ENCODE measurements at regions of chr5 and their contacts with region 1.

Region 1: GRCh38 chr5:141878711-141879425 is 658 bp upstream of the PCDH1 start:
- DNase-seq: peak; percentile 73 to 95 (median 74)
- ATAC-seq: peak; percentile 76
- H3K4me3 ChIP-seq: peak overlapping the region; percentile 58
- H3K27ac ChIP-seq: no peak overlapping the region
- H3K4me1 ChIP-seq: peaks cover 37 to 59% of the 10 kb centered on the region in 2 experiments; a peak in 4 of 5 replicates
- H3K27me3 ChIP-seq: peaks cover 26 to 75% of the 10 kb centered on the region in 2 experiments
- CTCF ChIP-seq: peak; percentile 92 to 98 (median 94)
- EP300 ChIP-seq: no peak
- POLR2A ChIP-seq: no peak
- RAD21 ChIP-seq: peak; percentile 84 to 93

Region 2: GRCh38 chr5:141691867-141692532 is 186.9 kb before region 1 on chr5:
- CTCF ChIA-PET with region 1: interaction called, 8 read pairs
- POLR2A ChIA-PET with region 1: no interaction called
- in situ Hi-C with region 1: no loop called
- intact Hi-C with region 1: loop called (anchors 1 kb)
- DNase-seq: peak; percentile 84 to 90 (median 88)
- ATAC-seq: peak; percentile 89
- H3K4me3 ChIP-seq: peak overlapping the region; percentile 17
- H3K27ac ChIP-seq: peak overlapping the region; percentile 81
- H3K4me1 ChIP-seq: peaks cover 38 to 55% of the 10 kb centered on the region in 2 experiments
- H3K27me3 ChIP-seq: peaks cover 0 to 12% of the 10 kb centered on the region in 2 experiments; a peak in 3 of 5 replicates
- CTCF ChIP-seq: peak; percentile 97 to 99 (median 98)
- EP300 ChIP-seq: no peak
- POLR2A ChIP-seq: no peak
- RAD21 ChIP-seq: peak; percentile 94 to 95

Region 3: DNA sequence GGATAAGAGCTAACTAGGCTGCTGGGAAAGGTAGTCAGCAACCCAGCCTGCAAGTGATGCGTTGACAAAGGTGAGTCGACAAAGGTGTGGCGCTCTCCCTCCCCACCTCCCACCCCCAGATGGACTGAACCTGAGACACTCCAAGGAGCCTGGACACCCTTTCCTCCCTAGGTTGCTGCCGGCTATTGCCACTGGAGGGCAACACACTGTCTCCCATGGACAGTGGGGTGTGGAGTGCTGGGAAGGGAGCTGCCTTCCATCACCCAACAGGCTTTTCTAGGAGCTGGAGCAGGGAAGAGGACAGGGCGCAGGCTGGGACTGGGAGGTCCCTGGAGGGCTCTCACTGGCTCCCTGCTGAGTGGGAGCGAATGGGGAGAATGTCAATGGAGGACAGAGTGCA is 121.5 kb before region 1 on chr5:
- CTCF ChIA-PET with region 1: no interaction called
- POLR2A ChIA-PET with region 1: interaction called, 4 read pairs
- in situ Hi-C with region 1: no loop called
- intact Hi-C with region 1: loop called (anchors 1 kb)
- DNase-seq: peak; percentile 31 to 55 (median 38)
- ATAC-seq: peak; percentile 85
- H3K4me3 ChIP-seq: no peak overlapping the region
- H3K27ac ChIP-seq: no peak overlapping the region
- H3K4me1 ChIP-seq: peaks cover 0 to 5% of the 10 kb centered on the region in 2 experiments; a peak in 1 of 5 replicates
- H3K27me3 ChIP-seq: peaks cover 24 to 74% of the 10 kb centered on the region in 2 experiments; a peak in 4 of 5 replicates
- CTCF ChIP-seq: peak; percentile 49 to 59 (median 52)
- EP300 ChIP-seq: no peak
- POLR2A ChIP-seq: no peak
- RAD21 ChIP-seq: peak; percentile 26 to 65; a peak in 2 of 4 replicates

Region 4: DNA sequence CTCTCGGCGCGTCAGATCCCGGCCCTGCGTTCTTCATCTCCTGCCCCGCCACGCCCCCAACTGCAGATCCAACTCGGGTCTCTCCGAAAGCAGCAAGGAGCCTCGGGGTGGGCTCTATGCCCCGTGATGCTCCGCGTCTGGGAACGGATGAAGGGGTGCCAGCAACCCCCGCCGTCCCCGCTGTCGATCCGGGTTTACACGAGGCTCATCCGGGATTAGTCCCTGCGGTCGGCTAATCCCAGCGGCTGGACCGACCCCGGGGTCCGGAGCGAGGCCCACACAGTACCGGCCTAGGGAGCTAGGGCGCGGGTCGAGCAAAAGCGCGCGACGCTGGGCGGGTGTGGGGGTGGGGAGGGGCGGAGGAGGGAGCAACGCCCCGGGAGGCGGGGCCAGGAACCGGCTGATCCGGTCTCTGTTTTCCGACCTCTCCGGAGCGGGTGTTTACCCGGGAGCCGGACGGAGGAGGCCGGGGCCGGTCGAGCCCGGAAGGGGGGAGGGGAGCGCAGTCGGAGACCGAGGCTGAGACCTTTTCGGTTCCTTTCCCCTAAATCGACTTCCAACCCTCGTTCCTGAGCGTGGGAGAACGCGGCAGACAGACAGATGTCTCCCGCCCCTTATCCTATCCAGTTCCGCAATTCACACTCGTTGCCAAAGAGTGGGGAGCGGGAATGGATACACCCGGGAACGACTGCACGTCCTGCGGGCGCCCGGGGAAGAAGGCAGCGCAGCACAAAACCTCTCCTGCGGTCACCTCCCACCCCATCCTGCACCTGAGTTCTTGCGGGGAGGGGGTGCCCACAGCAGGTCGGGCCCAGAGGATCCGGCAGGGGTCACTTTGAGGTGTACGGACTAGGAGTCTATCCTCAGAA is 29.3 kb before region 1 on chr5:
- CTCF ChIA-PET with region 1: no interaction called
- POLR2A ChIA-PET with region 1: interaction called, 3 read pairs
- in situ Hi-C with region 1: no loop called
- intact Hi-C with region 1: loop called (anchors 1 kb)
- DNase-seq: peak; percentile 91 to 94 (median 92)
- ATAC-seq: peak; percentile 86
- H3K4me3 ChIP-seq: peak overlapping the region; percentile 53
- H3K27ac ChIP-seq: peak overlapping the region; percentile 94
- H3K4me1 ChIP-seq: peaks cover 20 to 43% of the 10 kb centered on the region in 2 experiments
- H3K27me3 ChIP-seq: peaks cover 0 to 1% of the 10 kb centered on the region in 2 experiments; a peak in 1 of 5 replicates
- CTCF ChIP-seq: no peak
- EP300 ChIP-seq: peak; percentile 29
- POLR2A ChIP-seq: peak; percentile 89
- RAD21 ChIP-seq: no peak

Region 5: DNA sequence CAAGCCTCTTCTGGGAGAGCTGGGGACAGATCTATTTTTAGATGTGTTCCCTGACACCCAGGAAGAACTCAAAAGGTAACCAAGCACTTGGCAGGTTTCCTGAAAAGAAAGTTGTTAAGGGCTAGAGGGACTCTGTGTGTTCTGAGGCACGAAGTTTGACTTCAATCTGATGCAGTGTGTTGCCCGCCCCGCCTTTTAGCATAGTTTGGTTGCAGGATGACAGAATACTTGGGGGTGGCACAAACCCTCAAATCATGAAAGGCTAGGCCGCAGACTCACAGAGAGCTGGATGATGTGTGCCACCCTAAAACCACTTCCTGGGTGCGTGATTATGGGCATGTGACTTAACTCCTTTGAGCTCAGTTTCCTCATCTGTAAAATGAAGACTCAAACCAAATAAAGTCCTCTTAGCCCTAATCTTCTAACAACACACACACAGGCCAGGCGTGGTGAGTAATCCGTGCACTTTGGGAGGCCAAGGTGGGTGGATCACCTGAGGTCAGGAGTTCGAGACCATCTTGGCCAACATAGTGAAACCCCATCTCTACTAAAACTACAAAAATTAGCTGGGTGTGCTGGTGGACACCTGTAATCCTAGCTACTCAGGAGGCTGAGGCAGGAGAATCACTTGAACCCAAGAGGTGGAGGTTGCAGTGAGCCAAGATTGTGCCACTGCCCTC is 216.9 kb after region 1 on chr5:
- CTCF ChIA-PET with region 1: no interaction called
- POLR2A ChIA-PET with region 1: no interaction called
- in situ Hi-C with region 1: no loop called
- intact Hi-C with region 1: no loop called
- DNase-seq: peak in 1 of 4 experiments; percentile 38
- ATAC-seq: peak; percentile 48
- H3K4me3 ChIP-seq: no peak overlapping the region
- H3K27ac ChIP-seq: peak overlapping the region; percentile 41; the same call in 2 of the 3 replicates
- H3K4me1 ChIP-seq: peaks cover 11 to 23% of the 10 kb centered on the region in 2 experiments; a peak in 4 of 5 replicates
- H3K27me3 ChIP-seq: no peaks in the 10 kb centered on the region
- CTCF ChIP-seq: no peak
- EP300 ChIP-seq: no peak
- POLR2A ChIP-seq: no peak
- RAD21 ChIP-seq: no peak